ENCODE measurements at regions of chr4 and their contacts with region 1.

Region 1: DNA sequence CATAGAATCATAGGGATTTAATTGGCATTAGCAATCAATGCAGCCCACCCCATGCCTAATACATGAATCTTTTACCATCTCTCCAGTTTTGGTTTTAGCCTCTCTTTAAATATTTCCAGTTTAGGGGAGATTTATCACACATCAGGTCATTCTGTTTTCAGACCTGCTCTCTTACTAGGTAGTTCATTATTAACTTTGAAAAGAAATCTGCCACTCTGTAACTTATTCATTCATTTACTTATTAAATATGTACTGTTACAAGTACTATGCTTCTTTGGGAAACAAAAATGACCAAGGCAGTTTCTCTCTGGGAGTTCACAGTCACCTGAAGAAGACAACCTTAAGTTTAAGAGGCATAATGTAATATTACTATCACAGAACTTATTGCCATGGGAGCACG is 62.1 kb downstream of the USO1 start:
- DNase-seq: no peak
- ATAC-seq: no peak
- H3K4me3 ChIP-seq: no peak overlapping the region
- H3K27ac ChIP-seq: no peak overlapping the region
- H3K4me1 ChIP-seq: no peaks in the 10 kb centered on the region
- H3K27me3 ChIP-seq: no peaks in the 10 kb centered on the region
- CTCF ChIP-seq: no peak
- POLR2A ChIP-seq: no peak

Region 2: DNA sequence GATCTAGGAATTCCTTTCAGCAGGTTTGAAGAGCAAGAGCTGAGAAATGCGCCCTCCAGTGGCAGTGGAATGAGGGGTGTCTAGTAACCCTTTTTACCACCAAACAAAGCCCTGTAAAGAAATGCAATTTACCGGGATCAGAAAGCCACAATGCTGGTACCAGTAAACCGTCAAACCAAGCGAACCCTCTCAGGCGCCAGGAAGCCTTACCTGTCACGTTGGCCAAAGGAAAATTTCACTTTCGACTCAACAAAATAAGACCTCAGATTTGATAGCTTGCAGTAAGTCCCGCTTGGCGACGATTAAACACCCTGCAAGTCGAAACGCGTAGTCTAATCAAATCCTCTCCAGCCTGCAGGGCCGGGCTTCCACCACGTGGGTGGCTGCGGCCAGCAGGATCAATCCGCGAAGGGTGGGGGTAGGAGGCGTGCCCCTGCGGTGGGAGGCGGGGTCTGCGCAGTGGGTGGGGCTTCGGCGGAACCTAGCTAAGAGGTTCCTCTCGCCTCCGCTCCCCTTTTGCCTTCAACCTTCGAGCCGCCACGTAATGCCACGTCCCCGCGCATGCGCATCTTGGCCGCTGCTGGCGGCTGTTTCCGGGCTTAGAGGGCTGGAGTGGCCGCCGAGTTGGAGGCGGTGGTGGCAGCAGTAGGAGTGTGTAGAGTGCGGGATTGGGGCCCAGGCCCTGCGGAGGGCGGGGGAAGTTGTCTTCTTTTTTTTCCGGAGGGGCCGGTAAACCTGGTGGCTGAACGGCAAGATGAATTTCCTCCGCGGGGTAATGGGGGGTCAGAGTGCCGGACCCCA is 62.3 kb before region 1 on chr4 and contains the start of gene USO1:
- intact Hi-C with region 1: loop called in 1 of 10 experiments (anchors 10 kb)
- DNase-seq: peak; percentile 98 to 99 (median 99)
- ATAC-seq: peak; percentile 97 to 99 (median 98)
- H3K4me3 ChIP-seq: peak within 1 kb of the TSS; percentile 58 to 99 (median 94)
- H3K27ac ChIP-seq: peak within 1 kb of the TSS; percentile 92 to 99 (median 96)
- H3K4me1 ChIP-seq: peaks cover 0 to 59% (median 32%) of the 10 kb centered on the region in 12 donors
- H3K27me3 ChIP-seq: no peaks in the 10 kb centered on the region
- CTCF ChIP-seq: peak; percentile 41 to 77 (median 67)
- POLR2A ChIP-seq: peak; percentile 75 to 93
- total RNA-seq, gene USO1: 71.8 to 87.1 (median 77.3) TPM

Region 3: GRCh38 chr4:75985116-75985515 is 198.6 kb after region 1 on chr4:
- intact Hi-C with region 1: no loop called
- DNase-seq: no peak
- ATAC-seq: no peak
- H3K4me3 ChIP-seq: no peak overlapping the region
- H3K27ac ChIP-seq: no peak overlapping the region
- H3K4me1 ChIP-seq: peaks cover 0 to 23% (median 14%) of the 10 kb centered on the region in 12 donors
- H3K27me3 ChIP-seq: no peaks in the 10 kb centered on the region
- CTCF ChIP-seq: no peak
- POLR2A ChIP-seq: no peak